Activated naive CD4-positive, alpha-beta T cell treated with anti-CD3 and anti-CD28 coated beads, Interleukin-2, amount 10 ng/mL, durations not matched to agents 7 days and 5 days (primary cell): ENCODE measurements at regions of chr16 and their contacts with region 1.

Region 1: GRCh38 chr16:56970934-56971767 is 9.4 kb downstream of the CETP start:
- DNase-seq: no peak
- H3K4me3 Mint-ChIP-seq: no peak overlapping the region
- H3K27ac Mint-ChIP-seq: no peak overlapping the region
- H3K4me1 Mint-ChIP-seq: peaks cover 30% of the 10 kb centered on the region
- H3K27me3 Mint-ChIP-seq: peaks cover 22% of the 10 kb centered on the region

Region 2: DNA sequence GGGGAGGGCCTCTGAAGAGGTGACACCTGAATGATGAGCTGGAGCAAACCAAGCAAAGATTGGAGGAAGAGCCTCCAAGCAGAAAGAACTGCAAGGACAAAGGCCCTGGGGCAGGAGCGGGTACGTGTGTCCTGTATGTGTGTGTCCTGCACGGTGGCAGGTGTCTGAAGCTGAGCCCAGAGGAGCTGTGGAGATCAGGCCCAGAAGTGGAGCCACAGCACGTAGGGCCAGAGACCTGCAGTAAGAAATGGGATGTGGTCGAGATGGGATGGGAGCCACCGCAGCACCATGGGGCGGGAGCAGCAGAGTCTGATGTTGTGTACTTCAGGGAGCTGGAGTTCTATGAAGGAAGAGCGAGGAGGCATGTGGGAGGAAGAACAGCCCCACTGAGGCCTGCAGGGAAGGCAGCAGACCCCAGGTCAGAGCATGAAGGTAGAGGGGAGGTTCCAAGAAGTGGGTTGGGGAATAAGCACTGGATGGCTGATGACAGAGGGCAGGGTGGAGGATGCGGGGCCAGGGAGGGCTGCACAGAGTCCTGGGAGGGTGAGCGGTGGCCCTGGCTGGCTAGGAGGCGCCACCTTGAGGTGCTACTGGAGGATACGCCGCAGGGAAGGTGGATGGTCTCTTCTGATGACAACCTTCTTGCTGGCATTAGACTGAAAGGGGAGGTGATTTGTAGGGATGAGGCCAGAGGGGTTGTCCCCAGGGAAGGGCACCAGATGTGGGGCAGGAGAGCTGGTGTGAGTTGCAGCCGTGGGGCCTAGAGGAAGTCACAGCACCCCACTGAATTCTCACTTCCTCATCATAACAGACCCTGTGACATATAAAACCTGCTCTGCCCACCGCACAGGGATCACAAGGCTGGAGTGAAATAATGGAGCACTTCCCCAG is 20.0 kb before region 1 on chr16:
- CTCF ChIA-PET with region 1: interaction called, 32 read pairs
- DNase-seq: peak; percentile 75
- H3K4me3 Mint-ChIP-seq: no peak overlapping the region
- H3K27ac Mint-ChIP-seq: no peak overlapping the region
- H3K4me1 Mint-ChIP-seq: peaks cover 19% of the 10 kb centered on the region
- H3K27me3 Mint-ChIP-seq: no peaks in the 10 kb centered on the region